Activated CD4-positive, alpha-beta memory T cell treated with anti-CD3 and anti-CD28 coated beads for 36 hours (primary cell): ENCODE measurements at regions of chr22 and their contacts with region 1.

Region 1: GRCh38 chr22:39532215-39533071 is at the start of gene RPS19BP1:
- DNase-seq: peak; percentile 100
- H3K4me3 Mint-ChIP-seq: peak within 1 kb of the TSS; percentile 91
- H3K27ac Mint-ChIP-seq: peak within 1 kb of the TSS; percentile 80
- H3K4me1 Mint-ChIP-seq: peaks cover 58% of the 10 kb centered on the region
- H3K27me3 Mint-ChIP-seq: no peaks in the 10 kb centered on the region
- total RNA-seq, gene RPS19BP1: 65.2 to 67.5 TPM

Region 2: GRCh38 chr22:39306581-39307361 is 225.7 kb before region 1 on chr22:
- CTCF ChIA-PET with region 1: interaction called, 10 read pairs
- POLR2A ChIA-PET with region 1: interaction called, 5 read pairs
- intact Hi-C with region 1: no loop called
- DNase-seq: peak; percentile 75
- H3K4me3 Mint-ChIP-seq: no peak overlapping the region
- H3K27ac Mint-ChIP-seq: no peak overlapping the region
- H3K4me1 Mint-ChIP-seq: peaks cover 3% of the 10 kb centered on the region
- H3K27me3 Mint-ChIP-seq: no peaks in the 10 kb centered on the region

Region 3: DNA sequence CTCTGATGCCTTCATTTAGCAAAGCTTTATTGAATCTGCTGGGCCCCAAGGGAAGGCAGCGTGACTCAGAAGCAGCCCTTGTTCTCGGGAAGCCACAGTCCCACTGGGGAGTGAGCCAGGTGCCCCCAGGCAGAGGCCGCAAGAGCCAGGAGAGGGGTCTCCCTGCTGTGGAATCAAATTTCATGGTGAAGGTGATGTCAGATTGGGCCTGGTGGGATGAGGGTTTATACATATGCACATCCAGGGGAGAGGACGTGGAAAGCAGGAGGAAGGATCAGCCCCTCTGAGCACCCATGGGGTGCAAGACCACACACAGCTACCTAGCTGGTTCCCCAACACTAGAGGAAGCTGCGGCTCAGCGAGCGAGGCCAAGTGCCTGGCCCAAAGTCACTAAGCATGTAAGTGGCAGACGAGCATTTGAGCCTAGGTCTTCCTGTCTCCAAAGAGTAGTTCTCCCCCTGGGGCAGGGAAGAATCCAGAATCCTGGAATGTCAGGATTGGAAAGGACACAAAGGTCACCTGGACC is 180.7 kb before region 1 on chr22:
- CTCF ChIA-PET with region 1: no interaction called
- POLR2A ChIA-PET with region 1: no interaction called
- intact Hi-C with region 1: no loop called
- DNase-seq: no peak
- H3K4me3 Mint-ChIP-seq: no peak overlapping the region
- H3K27ac Mint-ChIP-seq: no peak overlapping the region
- H3K4me1 Mint-ChIP-seq: peaks cover 10% of the 10 kb centered on the region
- H3K27me3 Mint-ChIP-seq: peaks cover 22% of the 10 kb centered on the region

Region 4: DNA sequence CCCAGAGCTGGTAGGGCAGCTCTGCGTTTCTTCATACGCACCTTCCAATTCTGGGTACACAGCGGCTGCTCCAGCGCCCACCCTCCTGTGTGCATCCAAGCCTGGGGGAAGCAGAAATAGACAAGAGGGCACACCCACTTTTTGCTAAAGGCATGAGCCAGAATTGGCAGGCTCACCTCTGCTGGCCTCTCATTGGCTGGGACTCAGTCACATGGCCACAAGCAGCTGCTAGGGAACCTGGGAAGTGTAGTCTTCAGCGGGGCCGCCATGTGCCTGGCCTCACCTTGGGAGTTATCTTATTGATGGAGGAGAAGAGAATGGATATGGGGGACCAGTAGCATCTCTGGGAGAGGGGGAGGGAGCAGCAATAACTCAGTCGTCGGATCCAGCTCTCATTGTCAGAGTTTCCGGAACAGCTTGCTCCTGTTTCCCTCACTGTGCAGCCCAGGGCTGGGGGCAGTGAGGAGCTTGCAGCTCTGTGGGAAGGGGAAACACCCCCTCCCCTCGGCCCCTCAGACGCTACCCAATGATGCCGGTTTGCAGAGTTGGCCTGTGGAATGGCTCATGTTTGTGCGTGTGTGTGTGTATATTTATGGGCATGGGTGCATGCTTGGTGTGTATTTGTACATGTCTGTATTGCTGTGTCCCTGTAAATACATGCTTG is 42.2 kb before region 1 on chr22:
- CTCF ChIA-PET with region 1: interaction called, 387 read pairs
- POLR2A ChIA-PET with region 1: interaction called, 8 read pairs
- intact Hi-C with region 1: no loop called
- DNase-seq: peak; percentile 86
- H3K4me3 Mint-ChIP-seq: no peak overlapping the region
- H3K27ac Mint-ChIP-seq: no peak overlapping the region
- H3K4me1 Mint-ChIP-seq: peaks cover 8% of the 10 kb centered on the region
- H3K27me3 Mint-ChIP-seq: no peaks in the 10 kb centered on the region

Region 5: DNA sequence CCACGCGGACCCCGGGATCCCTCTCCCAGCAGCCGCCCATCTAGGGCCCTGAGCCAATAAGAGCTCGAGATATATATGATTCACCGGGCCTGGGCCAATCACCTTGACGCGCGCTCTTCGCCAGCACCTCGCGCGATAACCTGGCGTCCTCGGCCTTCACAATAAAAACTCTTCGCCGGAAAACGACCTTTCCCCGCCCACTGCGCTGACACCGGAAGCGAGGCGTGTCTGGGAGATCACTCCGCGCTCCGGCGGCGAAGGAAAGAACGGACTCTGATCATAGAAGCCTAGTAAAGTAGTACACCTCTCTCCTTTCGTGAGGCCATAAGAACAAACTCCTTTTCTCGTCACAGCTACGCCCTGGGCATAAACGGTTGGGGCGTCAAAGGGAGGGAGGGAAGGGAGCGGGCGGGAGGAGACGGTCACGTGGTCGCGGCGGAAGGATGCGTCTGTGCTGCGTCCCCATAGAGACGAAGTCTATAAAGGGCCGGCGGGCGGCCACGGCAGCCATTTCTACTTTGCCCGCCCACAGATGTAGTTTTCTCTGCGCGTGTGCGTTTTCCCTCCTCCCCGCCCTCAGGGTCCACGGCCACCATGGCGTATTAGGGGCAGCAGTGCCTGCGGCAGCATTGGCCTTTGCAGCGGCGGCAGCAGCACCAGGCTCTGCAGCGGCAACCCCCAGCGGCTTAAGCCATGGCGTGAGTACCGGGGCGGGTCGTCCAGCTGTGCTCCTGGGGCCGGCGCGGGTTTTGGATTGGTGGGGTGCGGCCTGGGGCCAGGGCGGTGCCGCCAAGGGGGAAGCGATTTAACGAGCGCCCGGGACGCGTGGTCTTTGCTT is 12.2 kb before region 1 on chr22 and contains the start of gene ATF4:
- CTCF ChIA-PET with region 1: interaction called, 71 read pairs
- POLR2A ChIA-PET with region 1: interaction called, 43 read pairs
- intact Hi-C with region 1: loop called (anchors 1 kb)
- DNase-seq: peak; percentile 98
- H3K4me3 Mint-ChIP-seq: peak within 1 kb of the TSS; percentile 84
- H3K27ac Mint-ChIP-seq: peak within 1 kb of the TSS; percentile 98
- H3K4me1 Mint-ChIP-seq: peaks cover 50% of the 10 kb centered on the region
- H3K27me3 Mint-ChIP-seq: peaks cover 4% of the 10 kb centered on the region
- total RNA-seq, gene ATF4: 437 to 455 TPM

Region 6: GRCh38 chr22:40024201-40025061 is 492.0 kb after region 1 on chr22:
- CTCF ChIA-PET with region 1: interaction called, 206 read pairs
- POLR2A ChIA-PET with region 1: interaction called, 6 read pairs
- intact Hi-C with region 1: loop called (anchors 2 kb)
- DNase-seq: peak; percentile 76
- H3K4me3 Mint-ChIP-seq: no peak overlapping the region
- H3K27ac Mint-ChIP-seq: no peak overlapping the region
- H3K4me1 Mint-ChIP-seq: no peaks in the 10 kb centered on the region
- H3K27me3 Mint-ChIP-seq: no peaks in the 10 kb centered on the region

Region 7: GRCh38 chr22:40107851-40108378 is 575.5 kb after region 1 on chr22:
- CTCF ChIA-PET with region 1: no interaction called
- POLR2A ChIA-PET with region 1: no interaction called
- intact Hi-C with region 1: no loop called
- DNase-seq: peak; percentile 55
- H3K4me3 Mint-ChIP-seq: peak overlapping the region; percentile 58
- H3K27ac Mint-ChIP-seq: peak overlapping the region; percentile 74
- H3K4me1 Mint-ChIP-seq: peaks cover 81% of the 10 kb centered on the region
- H3K27me3 Mint-ChIP-seq: no peaks in the 10 kb centered on the region

Region 8: DNA sequence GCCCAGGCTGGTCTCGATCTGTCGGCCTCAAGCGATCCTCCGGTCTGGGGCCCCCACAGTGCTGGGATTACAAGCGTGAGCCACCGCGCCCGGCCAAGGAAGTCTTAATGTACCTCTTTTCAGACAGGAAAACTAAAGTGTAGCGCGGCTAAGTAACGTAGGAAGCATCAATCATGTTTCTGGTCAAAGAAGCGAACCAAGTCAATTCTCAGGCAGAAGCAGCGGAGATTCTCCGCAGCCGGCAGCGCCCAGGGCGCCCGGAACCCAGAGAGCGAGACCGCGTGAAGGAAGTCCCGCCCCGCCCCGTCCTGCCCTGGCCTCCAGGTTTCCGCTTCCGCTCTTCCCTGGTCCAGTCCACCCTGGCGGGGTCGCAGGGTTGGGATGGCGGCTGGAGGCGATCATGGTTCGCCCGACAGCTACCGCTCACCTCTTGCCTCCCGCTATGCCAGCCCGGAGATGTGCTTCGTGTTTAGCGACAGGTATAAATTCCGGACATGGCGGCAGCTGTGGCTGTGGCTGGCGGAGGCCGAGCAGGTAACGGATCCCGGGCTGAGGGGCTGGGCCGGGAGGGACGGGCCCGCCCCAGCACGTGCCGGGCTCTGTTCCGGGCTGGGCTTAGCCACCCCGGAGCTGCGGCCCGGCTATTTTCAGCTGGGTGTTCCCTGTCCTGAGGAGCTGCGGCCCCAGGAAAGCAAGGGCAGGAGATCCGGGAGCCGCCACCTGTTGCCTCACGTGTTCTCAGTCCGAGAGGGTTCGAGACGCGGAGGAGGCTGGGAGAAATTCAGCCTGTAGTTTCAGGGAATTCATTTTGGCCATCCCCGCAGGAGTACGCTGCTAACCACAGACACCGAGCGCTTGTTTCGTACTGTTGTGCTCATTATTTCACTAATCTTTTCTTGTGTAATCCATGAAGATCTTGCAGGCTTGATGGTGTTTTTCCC is 814.0 kb after region 1 on chr22 and contains the start of gene ADSL:
- CTCF ChIA-PET with region 1: interaction called, 13 read pairs
- POLR2A ChIA-PET with region 1: no interaction called
- intact Hi-C with region 1: loop called (anchors 2 kb)
- DNase-seq: peak; percentile 91
- H3K4me3 Mint-ChIP-seq: peak within 1 kb of the TSS; percentile 99
- H3K27ac Mint-ChIP-seq: peak within 1 kb of the TSS; percentile 100
- H3K4me1 Mint-ChIP-seq: peaks cover 49% of the 10 kb centered on the region
- H3K27me3 Mint-ChIP-seq: no peaks in the 10 kb centered on the region
- total RNA-seq, gene ADSL: 143 to 146 TPM